Activated CD8-positive, alpha-beta memory T cell treated with anti-CD3 and anti-CD28 coated beads, Interleukin-2, amount 10 ng/mL, durations not matched to agents 7 days and 5 days (primary cell): ENCODE measurements at regions of chr16 and their contacts with region 1.

Region 1: DNA sequence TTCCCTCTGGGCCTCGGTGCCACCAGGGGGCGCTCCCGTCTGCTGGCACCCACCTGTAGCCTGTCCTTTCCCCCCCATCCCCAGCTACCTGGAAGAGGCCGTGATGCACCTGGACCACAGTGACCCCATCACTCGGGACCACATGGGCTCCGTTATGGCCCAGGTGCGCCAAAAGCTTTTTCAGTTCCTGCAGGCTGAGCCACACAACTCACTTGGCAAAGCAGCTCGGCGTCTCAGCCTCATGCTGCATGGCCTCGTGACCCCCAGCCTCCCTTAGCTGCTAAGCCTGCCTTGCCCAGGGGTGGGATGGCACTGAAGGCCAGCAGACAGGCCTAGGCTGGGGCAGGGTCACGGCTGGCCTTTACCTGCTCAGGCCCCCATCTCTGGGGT is 818 bp upstream of the NRN1L start:
- DNase-seq: peak; percentile 73
- ATAC-seq: peak; percentile 84
- H3K4me3 Mint-ChIP-seq: no peak overlapping the region
- H3K27ac Mint-ChIP-seq: peak overlapping the region; percentile 46
- H3K4me1 Mint-ChIP-seq: no peaks in the 10 kb centered on the region
- H3K27me3 Mint-ChIP-seq: no peaks in the 10 kb centered on the region

Region 2: DNA sequence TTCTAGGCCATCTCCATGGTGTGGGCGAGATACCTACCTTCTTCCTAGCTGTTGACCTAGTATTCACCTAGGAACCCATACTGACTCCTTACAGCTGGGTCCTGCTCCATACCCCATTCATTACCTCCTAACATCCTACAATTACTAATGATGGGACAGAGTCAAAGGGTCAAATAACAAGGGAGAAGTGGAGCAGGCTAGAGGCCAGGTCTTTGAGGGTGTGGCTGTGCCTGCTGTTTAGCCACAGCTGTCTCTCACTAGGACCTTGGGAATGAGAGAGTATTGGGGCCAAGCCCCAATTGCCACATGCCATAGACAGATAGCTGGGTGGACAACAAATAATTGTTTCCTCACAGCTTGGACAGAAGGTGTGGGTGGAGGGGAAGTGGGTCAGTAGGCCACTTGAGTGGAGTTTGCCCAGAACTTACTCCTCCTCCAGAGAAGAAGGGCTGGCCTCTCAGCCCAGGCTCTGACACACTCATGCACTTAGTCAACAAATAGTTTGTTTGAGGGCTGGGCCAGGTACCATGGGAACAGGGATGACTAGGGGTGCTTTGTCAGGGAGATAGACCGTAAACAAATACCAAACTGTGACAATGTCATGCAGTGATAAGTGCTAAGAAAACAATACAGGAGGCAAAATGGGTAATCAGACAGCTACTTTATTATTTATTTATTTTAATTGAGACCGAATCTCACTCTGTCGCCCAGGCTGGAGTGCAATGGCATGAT is 26.2 kb before region 1 on chr16:
- CTCF ChIA-PET with region 1: interaction called, 14 read pairs
- DNase-seq: no peak
- ATAC-seq: peak; percentile 67
- H3K4me3 Mint-ChIP-seq: no peak overlapping the region
- H3K27ac Mint-ChIP-seq: peak overlapping the region; percentile 49
- H3K4me1 Mint-ChIP-seq: peaks cover 17% of the 10 kb centered on the region
- H3K27me3 Mint-ChIP-seq: no peaks in the 10 kb centered on the region

Region 3: DNA sequence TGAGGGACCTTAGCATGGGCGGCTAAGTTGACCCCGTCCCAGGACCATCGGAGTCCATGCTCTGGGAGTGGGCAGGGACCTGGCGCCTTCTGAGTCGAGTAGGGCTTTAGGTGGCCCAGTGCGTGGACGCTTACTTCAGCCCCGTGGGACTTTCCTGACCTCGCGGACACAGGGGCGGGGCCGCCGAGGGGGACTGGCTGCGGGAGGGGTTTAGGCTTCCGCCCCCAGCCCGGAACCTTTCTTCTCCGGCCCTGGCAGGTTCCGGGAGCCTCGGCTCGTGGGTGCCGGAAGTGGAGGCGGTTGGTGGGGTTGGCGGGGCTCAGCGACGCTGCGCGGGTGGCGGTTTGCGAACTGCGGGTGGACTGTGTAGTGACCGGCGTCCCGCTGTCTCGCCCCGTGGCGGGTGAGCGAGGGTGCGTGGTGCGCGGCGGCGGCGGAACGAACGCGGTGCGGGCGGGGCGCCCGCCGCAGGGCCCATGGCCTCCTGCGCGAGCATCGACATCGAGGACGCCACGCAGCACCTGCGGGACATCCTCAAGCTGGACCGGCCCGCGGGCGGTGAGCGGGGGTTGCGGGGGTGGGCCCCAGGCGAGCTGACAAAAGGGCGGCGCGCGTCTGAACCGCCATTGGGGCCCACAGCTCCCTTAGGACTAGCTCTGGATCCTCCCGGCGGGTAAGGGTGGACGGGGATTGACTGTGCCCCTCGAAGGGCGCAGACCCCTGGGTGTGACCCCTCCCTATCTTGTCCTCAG is 10.9 kb before region 1 on chr16 and contains the start of gene EDC4:
- CTCF ChIA-PET with region 1: interaction called, 27 read pairs
- DNase-seq: peak; percentile 91
- ATAC-seq: peak; percentile 90
- H3K4me3 Mint-ChIP-seq: peak within 1 kb of the TSS; percentile 80
- H3K27ac Mint-ChIP-seq: peak within 1 kb of the TSS; percentile 90
- H3K4me1 Mint-ChIP-seq: peaks cover 31% of the 10 kb centered on the region
- H3K27me3 Mint-ChIP-seq: no peaks in the 10 kb centered on the region
- total RNA-seq, gene EDC4: 122 to 124 TPM

Region 4: DNA sequence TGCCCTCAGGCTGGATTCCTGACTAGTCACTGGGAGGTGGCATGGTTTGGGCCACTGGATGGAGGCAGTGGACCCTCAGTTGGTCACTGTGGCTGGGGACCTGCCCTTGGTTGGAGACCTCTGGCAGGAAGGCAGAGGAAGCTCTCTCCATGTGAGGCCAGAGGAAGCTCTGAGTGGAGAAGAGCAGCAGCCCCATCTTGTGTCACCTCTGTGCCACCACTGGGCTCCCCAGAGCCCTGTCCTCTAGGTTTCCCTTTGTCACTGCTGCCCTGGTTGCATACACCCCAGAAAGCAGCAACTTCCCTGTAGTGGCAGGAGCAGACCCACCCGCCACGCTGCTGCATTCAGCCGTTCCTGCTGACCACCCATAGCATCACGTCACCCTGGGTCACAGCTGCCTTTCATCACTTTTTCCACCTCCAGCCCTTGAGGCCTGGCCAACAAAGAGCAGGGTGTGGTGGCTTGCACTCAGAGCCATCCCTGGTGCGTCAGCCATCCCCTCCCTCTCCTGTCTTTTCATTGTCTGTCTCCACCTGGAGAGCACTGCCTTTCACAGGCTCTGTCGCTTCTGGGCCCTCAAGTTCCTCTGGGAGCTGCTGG is 35.9 kb after region 1 on chr16:
- CTCF ChIA-PET with region 1: interaction called, 24 read pairs
- DNase-seq: peak; percentile 43
- ATAC-seq: peak; percentile 32
- H3K4me3 Mint-ChIP-seq: no peak overlapping the region
- H3K27ac Mint-ChIP-seq: no peak overlapping the region
- H3K4me1 Mint-ChIP-seq: peaks cover 26% of the 10 kb centered on the region
- H3K27me3 Mint-ChIP-seq: no peaks in the 10 kb centered on the region

Region 5: DNA sequence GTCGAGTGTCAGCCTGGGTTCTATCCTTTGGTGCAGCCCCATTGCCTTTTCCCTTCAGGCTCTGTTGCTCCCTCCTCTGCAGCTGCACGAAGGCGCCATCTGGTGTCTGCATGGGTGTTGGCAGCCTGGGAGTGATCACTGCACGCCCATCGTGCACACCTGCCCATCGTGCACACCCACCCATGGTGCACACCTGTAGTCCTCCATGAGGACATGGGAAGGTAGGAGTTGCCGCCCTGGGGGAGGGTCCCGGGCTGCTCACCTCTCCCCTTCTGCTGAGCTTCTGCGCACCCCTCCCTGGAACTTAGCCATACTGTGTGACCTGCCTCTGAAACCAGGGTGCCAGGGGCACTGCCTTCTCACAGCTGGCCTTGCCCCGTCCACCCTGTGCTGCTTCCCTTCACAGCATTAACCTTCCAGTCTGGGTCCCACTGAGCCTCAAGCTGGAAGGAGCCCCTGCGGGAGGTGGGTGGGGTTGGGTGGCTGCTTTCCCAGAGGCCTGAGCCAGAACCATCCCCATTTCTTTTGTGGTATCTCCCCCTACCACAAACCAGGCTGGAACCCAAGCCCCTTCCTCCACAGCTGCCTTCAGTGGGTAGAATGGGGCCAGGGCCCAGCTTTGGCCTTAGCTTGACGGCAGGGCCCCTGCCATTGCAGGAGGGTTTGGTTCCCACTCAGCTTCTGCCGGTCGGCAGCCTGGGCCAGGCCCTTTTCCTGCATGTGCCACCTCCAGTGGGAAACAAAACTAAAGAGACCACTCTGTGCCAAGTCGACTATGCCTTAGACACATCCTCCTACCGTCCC is 44.9 kb after region 1 on chr16:
- CTCF ChIA-PET with region 1: interaction called, 38 read pairs
- DNase-seq: peak; percentile 86
- ATAC-seq: peak; percentile 92
- H3K4me3 Mint-ChIP-seq: no peak overlapping the region
- H3K27ac Mint-ChIP-seq: peak overlapping the region; percentile 6
- H3K4me1 Mint-ChIP-seq: no peaks in the 10 kb centered on the region
- H3K27me3 Mint-ChIP-seq: no peaks in the 10 kb centered on the region

Region 6: DNA sequence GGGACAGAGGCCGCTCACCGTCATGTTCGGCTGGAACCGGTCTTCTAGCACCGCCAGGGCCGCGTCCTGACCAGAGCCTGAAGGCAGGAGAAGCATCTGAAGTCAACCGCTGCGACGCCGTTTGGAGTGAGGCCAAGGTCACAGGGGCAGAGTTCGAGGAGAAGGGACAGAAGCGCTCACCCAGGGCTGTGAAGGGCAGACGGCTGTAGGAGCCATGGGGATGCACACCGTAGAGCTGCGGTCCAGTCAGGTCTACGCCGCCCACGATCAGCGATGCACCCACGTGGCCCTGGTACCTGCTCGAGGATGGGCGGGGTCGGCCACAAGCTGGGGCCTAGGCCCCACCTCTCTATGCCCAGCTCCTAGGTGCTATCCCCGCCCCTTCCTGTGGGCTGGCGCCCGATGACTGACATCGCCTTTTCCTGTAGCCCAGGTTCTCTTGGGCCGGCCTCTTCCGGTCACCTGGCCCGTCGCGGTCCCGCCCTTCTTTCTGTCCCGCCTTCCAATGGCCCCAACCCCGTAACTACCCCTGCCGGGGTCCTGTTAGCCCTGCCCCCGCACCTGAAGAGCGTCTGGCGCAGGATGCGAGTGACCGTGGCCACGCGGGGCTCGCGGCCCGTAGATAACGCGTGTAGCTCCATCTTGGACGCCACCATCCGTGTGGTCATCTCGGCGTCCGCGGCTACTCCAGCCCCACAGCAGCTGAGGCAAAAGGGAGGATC is 51.7 kb after region 1 on chr16:
- CTCF ChIA-PET with region 1: interaction called, 28 read pairs
- DNase-seq: peak; percentile 98
- ATAC-seq: peak; percentile 88
- H3K4me3 Mint-ChIP-seq: peak overlapping the region; percentile 99
- H3K27ac Mint-ChIP-seq: peak overlapping the region; percentile 98
- H3K4me1 Mint-ChIP-seq: peaks cover 37% of the 10 kb centered on the region
- H3K27me3 Mint-ChIP-seq: no peaks in the 10 kb centered on the region

Region 7: DNA sequence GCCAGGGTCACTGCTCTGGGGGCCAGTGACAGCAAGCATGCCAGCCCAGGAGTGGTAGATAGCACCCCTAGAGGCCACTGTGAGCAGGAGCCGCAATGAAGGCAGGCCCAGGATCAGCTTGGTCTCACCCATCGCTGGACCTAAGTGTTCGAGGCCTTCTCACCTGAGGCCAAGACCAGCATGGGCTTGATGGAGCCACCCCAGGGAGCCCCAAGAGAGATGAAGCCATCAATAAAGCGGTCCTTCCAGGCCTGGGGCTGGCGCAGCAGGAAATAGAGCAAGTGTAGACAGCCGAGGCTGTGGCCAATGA is 58.3 kb after region 1 on chr16:
- CTCF ChIA-PET with region 1: interaction called, 28 read pairs
- DNase-seq: peak; percentile 59
- ATAC-seq: peak; percentile 60
- H3K4me3 Mint-ChIP-seq: no peak overlapping the region
- H3K27ac Mint-ChIP-seq: no peak overlapping the region
- H3K4me1 Mint-ChIP-seq: peaks cover 30% of the 10 kb centered on the region
- H3K27me3 Mint-ChIP-seq: no peaks in the 10 kb centered on the region